Activated CD4-positive, alpha-beta T cell treated with anti-CD3 and anti-CD28 coated beads, Interleukin-2, amount 10 ng/mL, durations not matched to agents 24 days and 14 days (primary cell): ENCODE measurements at regions of chr1 and their contacts with region 1.

Region 1: DNA sequence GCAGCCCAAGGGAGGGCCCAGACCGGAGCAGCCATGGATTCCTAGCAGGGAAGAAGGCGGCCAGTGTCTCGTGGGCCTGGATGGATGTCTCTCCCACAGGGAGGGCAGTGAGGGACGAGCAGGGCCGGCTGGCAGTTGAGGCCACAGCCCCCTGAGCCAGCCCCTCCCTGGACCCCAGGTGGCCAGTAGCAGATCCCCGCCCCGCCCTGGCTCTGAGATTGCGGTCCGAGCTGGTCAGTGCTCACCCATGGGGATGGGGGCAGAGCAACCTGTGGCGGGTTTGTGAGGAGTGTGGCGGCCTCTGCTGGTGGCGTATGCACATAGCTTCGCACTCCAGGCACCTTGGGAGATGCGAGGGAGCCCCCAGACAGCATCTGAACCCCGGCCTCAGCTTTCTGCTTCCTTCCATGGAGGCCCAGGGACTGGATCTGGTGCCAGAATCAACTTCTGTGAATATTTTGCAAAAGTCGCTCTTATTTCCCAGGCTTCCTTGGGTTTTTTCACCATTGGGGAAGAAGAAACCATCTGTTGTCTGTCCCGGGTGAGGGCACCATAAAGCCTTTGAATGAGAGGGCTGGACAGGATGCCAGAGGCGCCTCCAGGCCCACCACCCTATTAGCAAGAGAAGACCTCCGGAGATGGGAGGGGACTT is 8.4 kb upstream of the KCNN3 start:
- DNase-seq: peak; percentile 92
- H3K4me3 Mint-ChIP-seq: no peak overlapping the region
- H3K27ac Mint-ChIP-seq: no peak overlapping the region
- H3K4me1 Mint-ChIP-seq: peaks cover 8% of the 10 kb centered on the region
- H3K27me3 Mint-ChIP-seq: peaks cover 2% of the 10 kb centered on the region

Region 2: DNA sequence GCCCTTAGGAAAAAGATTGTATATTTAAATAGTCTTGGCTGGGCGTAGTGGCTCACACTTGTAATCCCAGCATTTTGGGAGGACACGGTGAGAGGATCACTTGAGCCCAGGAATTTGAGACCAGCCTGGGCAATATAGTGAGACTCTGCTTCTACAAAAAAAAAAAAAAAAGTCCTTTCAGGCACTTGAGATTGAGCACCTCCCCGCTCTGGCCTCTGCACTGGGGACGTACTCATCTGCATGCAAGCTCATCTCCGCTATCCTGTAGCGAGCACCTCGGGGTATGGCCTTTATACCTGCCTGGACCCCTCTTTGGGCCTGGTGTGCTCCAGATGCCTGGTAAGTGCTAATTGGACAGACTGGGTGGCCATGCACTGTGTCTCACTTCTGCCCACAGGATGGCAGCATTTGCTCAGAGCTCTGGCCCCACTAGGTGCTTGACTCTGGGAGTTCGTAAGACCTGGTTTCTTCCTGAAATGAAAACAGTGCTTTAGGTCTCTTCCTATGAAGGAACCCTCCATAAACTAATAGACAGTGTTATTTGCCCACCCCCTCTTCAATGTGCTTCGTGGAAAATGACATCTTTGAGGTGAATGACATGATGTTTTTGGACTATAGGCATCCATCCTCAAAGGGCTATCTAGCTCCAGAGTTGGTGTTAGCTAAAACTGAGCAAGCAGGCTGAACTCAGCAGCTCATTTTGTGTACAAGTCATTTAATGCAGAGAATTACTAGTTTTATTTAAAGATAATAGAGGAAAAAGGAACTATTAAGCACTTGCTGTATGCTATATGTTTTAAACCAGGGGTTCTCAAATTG is 208.8 kb before region 1 on chr1:
- intact Hi-C with region 1: loop called (anchors 1 kb)
- DNase-seq: peak; percentile 93
- H3K4me3 Mint-ChIP-seq: no peak overlapping the region
- H3K27ac Mint-ChIP-seq: peak overlapping the region; percentile 53
- H3K4me1 Mint-ChIP-seq: peaks cover 12% of the 10 kb centered on the region
- H3K27me3 Mint-ChIP-seq: peaks cover 3% of the 10 kb centered on the region

Region 3: DNA sequence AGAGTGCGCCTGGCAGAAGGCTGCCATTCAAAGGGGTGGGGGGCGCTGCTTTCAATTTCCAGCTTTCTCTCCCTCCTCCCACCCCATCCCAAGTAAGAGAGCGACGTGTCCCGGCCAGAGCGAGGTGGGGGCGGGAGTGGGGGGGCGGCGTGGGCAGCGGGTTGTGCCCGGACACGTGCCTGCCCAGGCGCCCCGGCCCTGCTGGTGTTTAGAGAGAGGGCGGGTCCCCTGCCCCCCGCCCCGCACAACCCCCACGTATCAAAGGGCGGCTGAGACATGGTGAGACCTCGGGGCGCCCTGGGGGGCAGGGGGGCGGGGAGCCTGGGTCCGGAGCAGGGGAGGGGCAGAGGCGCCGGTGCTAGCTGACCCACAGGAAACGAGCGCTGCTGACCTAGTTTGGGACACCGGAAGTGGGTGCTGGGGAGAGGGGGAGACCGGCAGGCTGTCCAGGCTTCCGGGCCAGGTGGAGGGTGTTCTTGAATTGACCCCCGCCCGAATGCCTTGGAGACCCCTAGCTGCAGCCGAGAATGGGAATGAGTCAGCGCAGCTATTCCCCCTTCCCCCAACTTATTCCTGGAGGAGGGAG is 125.4 kb after region 1 on chr1:
- intact Hi-C with region 1: no loop called
- DNase-seq: peak; percentile 77
- H3K4me3 Mint-ChIP-seq: peak overlapping the region; percentile 99
- H3K27ac Mint-ChIP-seq: peak overlapping the region; percentile 96
- H3K4me1 Mint-ChIP-seq: peaks cover 54% of the 10 kb centered on the region
- H3K27me3 Mint-ChIP-seq: no peaks in the 10 kb centered on the region

Region 4: DNA sequence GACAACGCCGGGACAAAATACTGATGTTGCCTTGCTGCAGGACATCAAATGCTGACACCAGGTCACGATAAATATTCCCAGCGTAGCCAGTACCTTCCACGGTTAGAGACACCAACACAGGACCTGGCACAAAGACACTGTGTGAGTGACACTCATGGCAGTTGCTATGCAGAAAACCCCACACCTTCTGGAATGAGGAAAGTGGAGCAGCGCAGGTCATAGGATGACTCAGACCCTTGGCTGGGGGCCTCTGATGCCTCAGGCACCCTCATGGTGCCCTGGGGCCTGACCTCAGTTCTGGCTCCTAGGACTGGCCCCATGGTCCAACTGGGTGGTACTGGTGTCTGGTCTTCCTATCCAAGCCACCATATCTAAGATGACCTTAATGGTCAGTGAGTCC is 148.1 kb after region 1 on chr1:
- intact Hi-C with region 1: no loop called
- DNase-seq: no peak
- H3K4me3 Mint-ChIP-seq: no peak overlapping the region
- H3K27ac Mint-ChIP-seq: no peak overlapping the region
- H3K4me1 Mint-ChIP-seq: peaks cover 3% of the 10 kb centered on the region
- H3K27me3 Mint-ChIP-seq: peaks cover 2% of the 10 kb centered on the region